Activated CD4-positive, alpha-beta T cell treated with anti-CD3 and anti-CD28 coated beads, Interleukin-2, amount 10 ng/mL, durations not matched to agents 24 days and 14 days (primary cell): ENCODE measurements at regions of chr7 and their contacts with region 1.

Region 1: DNA sequence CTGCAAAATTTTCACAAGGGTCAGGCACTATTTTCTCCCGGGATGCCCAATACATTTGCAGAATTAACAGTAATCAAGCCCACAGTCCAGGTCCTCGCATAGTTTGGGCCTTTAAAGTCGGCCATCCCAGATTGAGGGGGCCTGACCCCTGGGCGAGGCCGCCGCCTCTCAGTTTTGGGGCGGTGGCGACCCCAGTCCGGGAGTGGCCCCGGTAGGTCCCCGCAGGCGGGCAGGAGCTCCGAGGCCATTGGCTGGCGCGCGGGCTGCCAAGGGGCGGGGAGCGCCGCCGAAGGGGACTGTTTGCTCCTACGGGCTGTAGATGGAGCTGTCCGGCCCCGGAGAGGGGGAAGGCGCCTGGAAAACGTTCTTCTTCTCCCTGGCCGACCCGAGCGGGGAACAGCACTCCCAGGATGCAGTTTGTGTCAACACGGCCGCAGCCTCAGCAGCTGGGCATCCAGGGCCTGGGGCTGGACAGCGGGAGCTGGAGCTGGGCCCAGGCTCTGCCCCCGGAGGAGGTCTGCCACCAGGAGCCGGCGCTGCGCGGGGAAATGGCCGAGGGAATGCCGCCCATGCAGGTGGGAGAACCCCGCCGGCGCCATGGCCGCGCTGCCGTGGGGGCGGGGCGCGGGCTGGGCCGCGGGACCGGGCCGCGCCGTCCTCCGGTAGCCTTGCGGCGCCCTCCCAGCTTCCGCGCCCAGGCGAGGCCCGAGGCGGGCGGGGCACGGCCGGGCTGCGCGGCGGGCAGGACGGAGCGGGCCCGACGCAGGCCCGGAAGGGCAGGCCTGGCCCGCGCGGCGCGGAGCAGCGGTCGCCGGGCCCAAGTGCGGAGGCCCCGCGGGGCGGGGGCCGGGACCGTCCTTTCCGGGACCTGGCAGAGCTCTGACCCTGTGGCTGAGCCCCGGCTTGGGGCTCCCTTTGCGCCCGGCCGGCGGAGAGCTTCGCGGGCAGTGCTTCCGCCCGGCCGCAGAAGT is at the start of gene ZNF282:
- DNase-seq: peak; percentile 94
- H3K4me3 Mint-ChIP-seq: peak within 1 kb of the TSS; percentile 96
- H3K27ac Mint-ChIP-seq: peak within 1 kb of the TSS; percentile 96
- H3K4me1 Mint-ChIP-seq: peaks cover 38% of the 10 kb centered on the region
- H3K27me3 Mint-ChIP-seq: peaks cover 4% of the 10 kb centered on the region
- total RNA-seq, gene ZNF282: 44.7 and 49.9 TPM in 2 replicates

Region 2: GRCh38 chr7:149147072-149147751 is 48.3 kb before region 1 on chr7 and contains the start of gene ZNF398:
- intact Hi-C with region 1: loop called (anchors 1 kb)
- DNase-seq: peak; percentile 93
- H3K4me3 Mint-ChIP-seq: peak within 1 kb of the TSS; percentile 93
- H3K27ac Mint-ChIP-seq: peak within 1 kb of the TSS; percentile 93
- H3K4me1 Mint-ChIP-seq: peaks cover 26% of the 10 kb centered on the region
- H3K27me3 Mint-ChIP-seq: no peaks in the 10 kb centered on the region
- total RNA-seq, gene ZNF398: 11.7 and 14.2 TPM in 2 replicates

Region 3: GRCh38 chr7:149180722-149181449 is 14.6 kb before region 1 on chr7:
- intact Hi-C with region 1: no loop called
- DNase-seq: no peak
- H3K4me3 Mint-ChIP-seq: no peak overlapping the region
- H3K27ac Mint-ChIP-seq: no peak overlapping the region
- H3K4me1 Mint-ChIP-seq: no peaks in the 10 kb centered on the region
- H3K27me3 Mint-ChIP-seq: no peaks in the 10 kb centered on the region

Region 4: DNA sequence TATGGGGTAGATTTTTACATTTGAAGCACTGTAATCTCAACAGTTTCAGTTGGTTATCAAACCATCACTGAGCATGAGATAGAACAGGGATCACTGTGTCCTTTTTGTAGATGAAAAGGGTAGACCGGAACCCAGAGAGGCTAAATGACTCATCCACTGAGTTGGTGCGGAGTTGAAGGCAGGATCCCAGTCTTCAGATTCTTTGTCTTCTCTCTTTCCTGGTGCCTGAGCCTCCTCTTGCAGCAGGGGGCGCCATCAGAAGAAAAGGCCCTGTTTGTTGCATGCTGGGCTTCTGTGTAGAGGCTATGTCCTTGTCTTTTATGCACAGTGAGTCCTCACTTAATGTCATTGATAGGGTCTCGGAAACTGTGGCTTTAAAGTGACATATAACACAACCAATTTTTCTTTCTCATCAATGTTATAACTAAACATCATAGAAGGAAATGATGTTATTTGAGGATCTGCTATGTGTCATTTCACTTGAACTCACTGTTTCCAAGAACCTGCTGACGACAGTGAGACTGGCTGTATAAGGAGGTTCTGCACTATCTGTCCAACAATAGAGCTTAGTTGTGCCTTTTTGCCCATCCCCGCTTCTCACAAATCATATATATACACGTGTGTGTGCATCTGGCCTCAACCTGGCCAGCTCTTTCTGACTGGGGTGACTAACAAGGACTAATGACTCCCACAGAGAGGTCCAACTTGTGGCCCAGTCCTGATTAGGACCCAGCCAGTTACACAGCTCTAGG is 14.2 kb after region 1 on chr7:
- intact Hi-C with region 1: loop called (anchors 1 kb)
- DNase-seq: peak; percentile 92
- H3K4me3 Mint-ChIP-seq: peak overlapping the region; percentile 49
- H3K27ac Mint-ChIP-seq: peak overlapping the region; percentile 93
- H3K4me1 Mint-ChIP-seq: peaks cover 16% of the 10 kb centered on the region
- H3K27me3 Mint-ChIP-seq: no peaks in the 10 kb centered on the region

Region 5: DNA sequence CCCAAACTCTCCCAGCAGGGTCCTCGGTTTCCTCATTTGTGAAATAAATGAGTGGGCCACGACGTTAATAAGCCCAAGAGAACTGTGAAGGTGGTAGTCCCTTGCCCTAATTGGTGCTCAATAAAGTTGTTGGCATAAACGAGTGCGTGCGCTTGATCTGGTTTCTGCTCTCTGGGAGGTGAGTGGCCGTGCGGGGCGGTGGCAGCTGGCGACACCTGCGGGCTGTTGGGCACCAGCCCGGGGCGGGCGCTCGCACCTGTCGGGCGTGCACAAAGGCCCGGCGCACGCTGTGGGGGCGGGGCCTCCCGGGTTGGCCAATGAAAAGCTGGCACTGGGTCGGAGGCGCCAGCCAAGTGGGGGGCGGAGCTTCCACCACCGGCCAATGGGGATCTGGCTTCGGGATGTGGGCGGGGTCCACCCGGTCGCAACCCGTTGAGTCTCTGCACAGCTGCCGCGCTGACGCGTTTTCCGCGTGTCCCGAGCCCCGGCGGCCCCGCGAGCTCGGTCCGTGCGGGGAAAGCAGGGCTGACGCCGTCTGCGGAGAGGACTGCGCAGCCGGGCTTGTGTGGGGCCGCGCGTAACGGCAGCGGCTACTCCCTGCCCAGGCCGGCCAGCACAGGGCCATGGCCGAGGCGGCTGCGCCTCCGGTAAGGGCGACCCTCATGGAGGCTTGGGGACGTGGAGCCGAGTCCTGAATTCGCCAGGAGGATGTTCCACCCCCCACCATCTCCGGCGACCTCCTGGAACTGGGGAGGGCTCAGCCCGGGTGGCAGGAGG is 89.6 kb after region 1 on chr7:
- intact Hi-C with region 1: loop called (anchors 2 kb)
- DNase-seq: peak; percentile 100
- H3K4me3 Mint-ChIP-seq: peak overlapping the region; percentile 83
- H3K27ac Mint-ChIP-seq: peak overlapping the region; percentile 58
- H3K4me1 Mint-ChIP-seq: peaks cover 32% of the 10 kb centered on the region
- H3K27me3 Mint-ChIP-seq: no peaks in the 10 kb centered on the region